Lower leg skin (tissue), 4 donors: ENCODE measurements at regions of chr5 and their contacts with region 1.

Region 1: GRCh38 chr5:107655836-107656235 is 14.9 kb downstream of the EFNA5 start:
- DNase-seq: no peak
- H3K4me3 ChIP-seq: no peak overlapping the region
- CTCF ChIP-seq: no peak
- POLR2A ChIP-seq: no peak

Region 2: GRCh38 chr5:107578051-107578635 is 77.7 kb before region 1 on chr5:
- intact Hi-C with region 1: loop called (anchors 5 kb)
- DNase-seq: no peak
- H3K4me3 ChIP-seq: no peak overlapping the region
- CTCF ChIP-seq: no peak
- POLR2A ChIP-seq: no peak